Sigmoid colon (tissue), 7 donors: ENCODE measurements at regions of chr11 and their contacts with region 1.

Region 1: DNA sequence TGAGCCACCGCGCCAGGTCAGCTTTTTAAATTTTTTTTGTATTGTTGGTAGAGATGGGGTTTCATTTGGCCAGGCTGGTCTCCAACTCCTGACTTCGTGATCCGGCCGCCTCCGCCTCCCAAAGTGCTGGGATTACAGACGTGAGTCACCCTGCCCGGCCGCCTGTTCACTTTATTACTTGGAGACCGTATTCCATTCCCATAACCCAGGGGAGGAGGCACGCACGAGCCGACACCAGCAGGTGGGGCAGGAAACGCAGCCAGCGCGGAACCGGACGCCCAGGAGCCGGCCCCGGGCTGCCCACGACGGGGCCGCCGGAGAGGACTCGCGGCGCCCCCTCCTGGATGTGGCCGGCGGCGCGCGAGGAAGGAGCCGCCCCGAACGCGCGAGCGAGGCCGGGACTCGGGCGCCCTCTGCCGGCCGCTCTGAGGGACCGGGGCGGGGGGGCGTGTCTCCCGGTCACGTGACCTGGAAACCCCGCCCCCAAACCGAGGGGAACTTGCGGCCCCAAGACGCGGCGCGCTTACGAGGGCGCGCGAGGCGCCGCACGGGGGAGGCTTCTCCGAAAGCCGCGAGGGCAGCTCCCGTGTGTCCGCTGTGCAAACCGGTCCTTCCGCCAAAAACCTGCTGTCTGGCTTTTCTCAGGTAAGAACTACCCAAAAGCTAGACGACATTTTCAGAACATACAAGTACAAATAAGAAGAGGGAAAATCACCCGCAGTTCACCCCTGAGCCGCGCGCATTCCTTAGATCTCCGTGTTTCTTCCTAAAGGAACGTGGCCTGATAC is 11.6 kb upstream of the RNH1 start:
- DNase-seq: peak; percentile 98
- H3K4me3 ChIP-seq: peak overlapping the region in 3 of 4 donors; percentile 23 to 37 (median 32)
- H3K27ac ChIP-seq: peak overlapping the region; percentile 81 to 90 (median 84)
- H3K4me1 ChIP-seq: peaks cover 0 to 9% (median 4%) of the 10 kb centered on the region in 4 donors
- H3K27me3 ChIP-seq: no peaks in the 10 kb centered on the region
- CTCF ChIP-seq: peak; percentile 54 to 99 (median 76)
- EP300 ChIP-seq: peak in 1 of 4 donors; percentile 9
- POLR2A ChIP-seq: no peak

Region 2: DNA sequence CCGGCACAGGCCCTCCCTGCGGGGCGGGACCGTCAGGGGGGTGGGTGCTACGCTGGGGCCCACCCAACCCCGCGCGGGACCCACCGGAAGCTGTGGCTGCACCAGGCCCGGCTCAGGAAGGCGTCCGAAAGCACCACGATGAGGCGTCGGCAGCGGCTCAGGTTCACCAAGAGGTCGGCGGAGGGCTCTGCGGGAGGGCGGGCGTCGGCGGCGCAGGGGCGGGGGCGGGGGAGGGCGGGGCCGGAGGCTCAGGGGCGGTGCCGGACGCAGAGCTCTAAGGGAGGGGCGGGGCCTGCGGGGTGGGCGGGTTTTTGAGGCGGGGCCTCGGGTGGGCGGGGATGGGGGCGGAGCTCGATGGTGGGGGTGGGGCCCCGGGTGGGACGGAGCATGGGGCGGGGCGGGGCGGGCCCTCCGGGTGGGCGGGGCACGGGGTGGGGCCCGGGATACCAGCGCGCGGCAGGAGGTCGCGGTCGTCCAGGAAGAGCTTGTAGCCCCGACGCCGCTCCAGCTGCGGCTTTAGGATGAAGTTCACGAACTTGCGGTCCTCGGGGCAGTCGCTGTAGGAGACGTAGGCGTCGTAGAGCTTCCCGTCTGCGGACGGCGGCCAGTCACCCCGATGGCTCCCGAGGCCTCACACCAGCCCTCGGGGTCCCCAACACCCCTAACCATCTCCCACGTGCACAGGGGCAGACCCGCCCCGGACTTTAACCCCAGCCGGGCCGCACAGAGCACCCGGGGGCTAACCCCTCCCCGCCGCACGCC is 111.5 kb before region 1 on chr11:
- intact Hi-C with region 1: loop called (anchors 1 kb)
- DNase-seq: peak; percentile 91
- H3K4me3 ChIP-seq: peak overlapping the region; percentile 56 to 79 (median 62)
- H3K27ac ChIP-seq: peak overlapping the region; percentile 70 to 77 (median 74)
- H3K4me1 ChIP-seq: peaks cover 0 to 20% (median 19%) of the 10 kb centered on the region in 4 donors
- H3K27me3 ChIP-seq: peaks cover 0 to 8% (median 7%) of the 10 kb centered on the region in 3 donors
- CTCF ChIP-seq: no peak
- EP300 ChIP-seq: no peak
- POLR2A ChIP-seq: no peak

Region 3: DNA sequence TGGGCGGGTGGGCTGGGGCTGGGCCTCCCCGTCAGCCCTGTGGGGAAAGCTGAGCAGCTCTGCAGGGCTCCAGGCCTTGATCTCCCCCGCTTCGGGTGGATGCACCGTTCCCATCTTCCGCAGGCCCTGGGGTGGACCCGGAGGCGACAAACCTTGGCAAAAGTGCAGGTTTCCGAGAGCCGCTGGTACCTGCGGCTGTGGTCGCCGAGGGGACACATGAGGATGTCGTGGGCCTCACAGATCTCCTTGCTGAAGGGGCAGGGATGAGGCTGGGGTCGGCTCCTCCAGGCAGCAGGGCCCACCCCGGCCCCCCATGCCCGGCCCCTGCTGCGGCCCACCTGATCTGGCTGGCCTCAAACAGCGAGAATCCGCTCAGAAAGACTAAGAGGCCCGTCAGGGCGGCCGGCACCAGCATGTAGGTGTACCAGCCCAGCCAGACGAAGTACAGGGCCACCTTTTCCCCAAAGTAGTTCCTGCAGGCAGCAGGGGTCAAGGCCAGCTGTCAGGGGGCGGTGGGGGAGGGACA is 88.7 kb before region 1 on chr11:
- intact Hi-C with region 1: no loop called
- DNase-seq: no peak
- H3K4me3 ChIP-seq: no peak overlapping the region
- H3K27ac ChIP-seq: no peak overlapping the region
- H3K4me1 ChIP-seq: no peaks in the 10 kb centered on the region
- H3K27me3 ChIP-seq: peaks cover 0 to 13% (median 13%) of the 10 kb centered on the region in 3 donors
- CTCF ChIP-seq: no peak
- EP300 ChIP-seq: no peak
- POLR2A ChIP-seq: no peak

Region 4: GRCh38 chr11:469684-470560 is 48.7 kb before region 1 on chr11:
- intact Hi-C with region 1: no loop called
- DNase-seq: peak; percentile 89
- H3K4me3 ChIP-seq: peak overlapping the region; percentile 10 to 37 (median 34)
- H3K27ac ChIP-seq: peak overlapping the region; percentile 71 to 86 (median 82)
- H3K4me1 ChIP-seq: peaks cover 0 to 18% (median 15%) of the 10 kb centered on the region in 4 donors
- H3K27me3 ChIP-seq: no peaks in the 10 kb centered on the region
- CTCF ChIP-seq: peak in 2 of 4 experiments; percentile 23 to 26
- EP300 ChIP-seq: peak in 2 of 4 donors; percentile 39 to 40
- POLR2A ChIP-seq: no peak

Region 5: GRCh38 chr11:535519-536454 is 17.1 kb after region 1 on chr11 and contains the start of gene HRAS:
- intact Hi-C with region 1: loop called (anchors 2 kb)
- DNase-seq: peak; percentile 97
- H3K4me3 ChIP-seq: peak within 1 kb of the TSS; percentile 57 to 94 (median 80)
- H3K27ac ChIP-seq: peak within 1 kb of the TSS; percentile 82 to 88 (median 84)
- H3K4me1 ChIP-seq: peaks cover 0 to 37% (median 33%) of the 10 kb centered on the region in 4 donors
- H3K27me3 ChIP-seq: peaks cover 18 to 39% (median 21%) of the 10 kb centered on the region in 3 donors
- CTCF ChIP-seq: no peak
- EP300 ChIP-seq: no peak
- POLR2A ChIP-seq: peak in 1 of 2 donors; percentile 50
- total RNA-seq, gene HRAS: 27.8 to 59.3 (median 32.8) TPM

Region 6: GRCh38 chr11:662689-663274 is 144.1 kb after region 1 on chr11:
- intact Hi-C with region 1: no loop called
- DNase-seq: no peak
- H3K4me3 ChIP-seq: no peak overlapping the region
- H3K27ac ChIP-seq: no peak overlapping the region
- H3K4me1 ChIP-seq: peaks cover 0 to 17% (median 10%) of the 10 kb centered on the region in 4 donors
- H3K27me3 ChIP-seq: no peaks in the 10 kb centered on the region
- CTCF ChIP-seq: peak; percentile 65 to 70 (median 67)
- EP300 ChIP-seq: no peak
- POLR2A ChIP-seq: no peak